Cardiac septum (tissue), 1 donor: ENCODE measurements at regions of chr20 and their contacts with region 1.

Region 1: GRCh38 chr20:23245553-23246181 is 104.9 kb upstream of the NXT1 start:
- DNase-seq: peak; percentile 89

Region 2: DNA sequence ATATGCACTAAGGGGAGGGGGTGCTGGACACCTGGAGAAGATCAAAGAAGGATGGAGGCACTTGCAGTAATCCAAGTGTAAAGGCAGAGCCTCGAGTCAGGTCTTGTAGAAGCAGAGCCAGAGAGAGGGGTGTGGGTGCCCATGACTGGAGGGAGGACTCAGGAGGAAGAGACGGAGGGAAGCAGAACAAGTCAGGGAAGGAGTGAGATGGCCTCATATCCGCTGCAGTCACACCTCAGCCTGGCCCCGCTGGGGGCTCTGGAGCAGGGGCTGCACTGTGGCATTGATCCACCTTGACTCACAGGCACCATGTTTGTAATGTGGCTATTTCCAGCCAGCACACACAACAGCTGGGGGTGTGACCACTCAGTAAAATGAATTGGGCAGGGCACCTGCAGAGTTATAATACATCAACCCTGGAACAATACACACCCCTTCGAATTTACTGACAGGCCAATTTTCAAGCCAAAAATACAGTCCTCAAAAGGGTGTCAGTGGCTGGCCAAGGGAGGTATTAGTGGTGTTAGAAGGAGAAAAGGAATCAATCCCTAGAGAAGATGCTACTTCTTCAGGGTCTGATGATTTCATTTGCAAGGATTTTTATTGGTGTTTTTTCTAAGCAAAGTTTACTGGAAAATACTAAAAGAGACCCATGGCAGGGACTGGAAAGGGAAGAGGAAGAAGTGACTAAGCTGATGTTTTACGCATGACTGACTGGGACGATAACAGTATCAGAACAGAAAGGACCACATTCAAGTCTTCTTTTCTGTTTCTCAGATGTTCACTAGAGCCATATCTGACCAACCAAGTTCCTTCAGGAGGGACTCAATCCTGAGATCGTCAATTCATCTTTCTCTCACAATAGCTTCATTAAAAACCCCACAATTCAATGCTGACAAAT is 86.0 kb after region 1 on chr20:
- intact Hi-C with region 1: loop called (anchors 5 kb)
- DNase-seq: peak; percentile 66